ENCODE measurements at regions of chr12 and their contacts with region 1.

Region 1: DNA sequence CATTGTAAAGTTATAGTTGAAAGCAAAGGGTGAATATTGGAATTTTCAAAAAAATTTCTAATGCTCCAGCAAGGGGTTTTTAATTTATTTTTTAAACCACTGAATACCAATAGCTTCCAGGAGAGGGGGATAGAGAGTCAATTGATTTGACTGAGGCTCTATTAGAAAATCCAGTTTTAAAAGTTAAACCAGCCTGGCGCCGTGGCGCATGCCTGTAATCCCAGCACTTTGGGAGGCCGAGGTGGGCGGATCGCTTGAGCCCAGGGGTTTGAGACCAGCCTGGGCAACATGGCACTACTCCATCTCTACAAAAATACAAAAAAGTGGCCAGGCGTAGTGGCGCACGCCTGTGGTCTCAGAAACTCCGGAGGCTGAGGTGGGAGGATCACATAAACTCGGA is 150.1 kb downstream of the SLC38A4 start:
- DNase-seq: no peak
- H3K4me3 Mint-ChIP-seq: no peak overlapping the region
- H3K27ac Mint-ChIP-seq: no peak overlapping the region
- H3K4me1 Mint-ChIP-seq: peaks cover 6% of the 10 kb centered on the region
- H3K27me3 Mint-ChIP-seq: peaks cover 3% of the 10 kb centered on the region

Region 2: GRCh38 chr12:46071769-46072624 is 603.7 kb before region 1 on chr12:
- CTCF ChIA-PET with region 1: no interaction called
- POLR2A ChIA-PET with region 1: no interaction called
- intact Hi-C with region 1: loop called (anchors 2 kb)
- DNase-seq: peak; percentile 74
- H3K4me3 Mint-ChIP-seq: no peak overlapping the region
- H3K27ac Mint-ChIP-seq: no peak overlapping the region
- H3K4me1 Mint-ChIP-seq: peaks cover 3% of the 10 kb centered on the region
- H3K27me3 Mint-ChIP-seq: no peaks in the 10 kb centered on the region

Region 3: GRCh38 chr12:46153268-46153872 is 522.4 kb before region 1 on chr12:
- CTCF ChIA-PET with region 1: no interaction called
- POLR2A ChIA-PET with region 1: no interaction called
- intact Hi-C with region 1: loop called (anchors 5 kb)
- DNase-seq: no peak
- H3K4me3 Mint-ChIP-seq: no peak overlapping the region
- H3K27ac Mint-ChIP-seq: no peak overlapping the region
- H3K4me1 Mint-ChIP-seq: peaks cover 5% of the 10 kb centered on the region
- H3K27me3 Mint-ChIP-seq: peaks cover 1% of the 10 kb centered on the region

Region 4: GRCh38 chr12:46342562-46343033 is 333.1 kb before region 1 on chr12:
- CTCF ChIA-PET with region 1: interaction called, 3 read pairs
- POLR2A ChIA-PET with region 1: no interaction called
- intact Hi-C with region 1: loop called (anchors 5 kb)
- DNase-seq: peak; percentile 22
- H3K4me3 Mint-ChIP-seq: no peak overlapping the region
- H3K27ac Mint-ChIP-seq: no peak overlapping the region
- H3K4me1 Mint-ChIP-seq: no peaks in the 10 kb centered on the region
- H3K27me3 Mint-ChIP-seq: peaks cover 8% of the 10 kb centered on the region

Region 5: DNA sequence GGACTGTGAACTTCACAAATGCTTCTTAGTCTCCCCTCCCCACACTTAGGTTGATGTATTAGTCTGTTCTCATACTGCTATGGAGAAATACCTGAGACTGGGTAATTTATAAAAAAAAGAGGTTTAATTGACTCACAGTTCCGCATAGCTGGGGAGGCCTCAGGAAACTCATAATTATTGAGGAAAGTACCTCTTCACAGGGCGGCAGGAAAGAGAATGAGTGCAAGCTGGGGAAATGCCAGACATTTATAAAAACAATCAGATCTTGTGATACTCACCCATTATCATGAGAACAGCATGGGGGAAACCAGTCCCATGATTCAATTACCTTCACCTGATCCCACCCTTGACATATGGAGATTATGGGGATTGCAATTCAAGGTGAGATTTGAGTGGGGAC is 28.7 kb before region 1 on chr12:
- CTCF ChIA-PET with region 1: no interaction called
- POLR2A ChIA-PET with region 1: no interaction called
- intact Hi-C with region 1: no loop called
- DNase-seq: no peak
- H3K4me3 Mint-ChIP-seq: no peak overlapping the region
- H3K27ac Mint-ChIP-seq: no peak overlapping the region
- H3K4me1 Mint-ChIP-seq: no peaks in the 10 kb centered on the region
- H3K27me3 Mint-ChIP-seq: no peaks in the 10 kb centered on the region

Region 6: GRCh38 chr12:46933947-46934346 is 258.2 kb after region 1 on chr12:
- CTCF ChIA-PET with region 1: interaction called, 5 read pairs
- POLR2A ChIA-PET with region 1: no interaction called
- intact Hi-C with region 1: loop called (anchors 2 kb)
- DNase-seq: no peak
- H3K4me3 Mint-ChIP-seq: no peak overlapping the region
- H3K27ac Mint-ChIP-seq: no peak overlapping the region
- H3K4me1 Mint-ChIP-seq: no peaks in the 10 kb centered on the region
- H3K27me3 Mint-ChIP-seq: peaks cover 12% of the 10 kb centered on the region

Region 7: DNA sequence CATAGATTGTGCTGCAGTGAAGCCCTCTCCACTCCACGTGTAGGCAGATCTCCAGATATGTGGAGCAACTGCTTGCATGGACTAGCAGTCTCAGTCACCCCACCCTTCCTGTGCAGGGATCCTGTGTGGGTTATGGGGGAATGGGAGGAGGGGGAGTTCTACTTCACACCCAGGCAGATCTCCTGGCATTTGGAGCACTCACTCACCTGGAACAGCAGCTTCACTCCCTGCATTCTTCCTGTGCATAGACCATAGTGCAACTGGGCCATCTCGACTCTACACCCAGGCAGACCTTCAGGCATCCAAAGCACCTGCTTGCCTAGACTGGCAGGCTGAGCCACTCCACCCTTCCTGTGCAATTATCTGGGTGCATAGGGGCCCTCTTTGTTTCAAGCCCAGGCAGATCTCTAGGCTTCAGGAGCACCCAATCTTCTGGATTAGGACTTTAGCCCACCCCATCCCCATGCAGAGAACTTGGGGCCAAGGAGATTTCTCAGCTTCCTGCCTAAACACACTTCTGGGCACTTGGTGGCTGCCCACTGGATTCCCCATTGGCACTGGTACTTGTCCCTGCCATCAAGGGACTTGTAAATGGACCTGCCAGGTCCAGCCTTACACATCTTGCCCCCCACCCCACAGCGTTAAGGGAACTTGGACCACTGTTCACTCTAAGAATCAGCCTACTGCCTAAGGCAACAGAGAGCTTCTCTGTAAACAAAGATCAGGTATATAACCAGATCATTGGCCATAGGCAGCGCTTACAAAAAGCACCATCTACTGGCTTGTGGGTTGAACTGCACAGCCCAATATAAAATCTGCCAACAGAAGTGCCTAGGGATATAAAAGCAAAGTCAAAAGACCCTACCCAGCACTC is 307.9 kb after region 1 on chr12:
- CTCF ChIA-PET with region 1: interaction called, 9 read pairs
- POLR2A ChIA-PET with region 1: no interaction called
- intact Hi-C with region 1: loop called (anchors 5 kb)
- DNase-seq: peak; percentile 40
- H3K4me3 Mint-ChIP-seq: no peak overlapping the region
- H3K27ac Mint-ChIP-seq: no peak overlapping the region
- H3K4me1 Mint-ChIP-seq: peaks cover 8% of the 10 kb centered on the region
- H3K27me3 Mint-ChIP-seq: peaks cover 16% of the 10 kb centered on the region

Region 8: DNA sequence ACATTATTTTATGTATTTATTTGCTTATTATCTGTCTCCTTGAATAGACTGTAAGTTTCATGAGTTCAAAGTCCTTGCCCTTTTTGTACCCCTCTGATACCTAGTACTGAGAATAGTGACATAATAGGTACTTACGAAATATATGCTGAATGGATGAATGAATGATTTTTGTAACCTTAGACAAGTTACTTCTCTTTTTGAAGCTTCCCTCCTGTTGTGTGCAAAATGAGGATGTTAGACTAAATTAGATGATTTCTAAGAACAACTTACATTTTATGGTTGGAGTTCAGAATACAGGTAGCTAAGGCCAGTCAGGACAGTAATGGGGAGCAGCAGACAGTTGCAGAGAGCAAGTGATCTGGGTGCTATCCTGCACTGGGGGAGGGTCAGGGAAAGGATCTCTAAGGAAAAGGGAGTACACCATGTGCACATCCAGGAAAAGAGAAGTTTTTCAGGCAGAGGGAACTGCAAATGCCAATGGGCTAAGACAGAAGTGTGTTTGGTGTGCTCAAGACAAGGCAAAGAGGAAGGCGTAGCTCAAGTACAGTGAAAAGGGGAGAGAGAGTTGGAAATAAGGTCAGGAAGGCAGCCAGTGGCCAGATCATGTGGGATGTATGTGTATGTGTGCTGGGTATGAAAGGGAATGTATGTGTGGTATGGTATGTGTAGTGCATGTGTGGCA is 463.4 kb after region 1 on chr12:
- CTCF ChIA-PET with region 1: no interaction called
- POLR2A ChIA-PET with region 1: no interaction called
- intact Hi-C with region 1: no loop called
- DNase-seq: no peak
- H3K4me3 Mint-ChIP-seq: no peak overlapping the region
- H3K27ac Mint-ChIP-seq: no peak overlapping the region
- H3K4me1 Mint-ChIP-seq: peaks cover 10% of the 10 kb centered on the region
- H3K27me3 Mint-ChIP-seq: no peaks in the 10 kb centered on the region

Measured in activated CD4-positive, alpha-beta memory T cell treated with anti-CD3 and anti-CD28 coated beads for 36 hours (primary cell).